H1 (cell line): ENCODE measurements at regions of chr12 and their contacts with region 1.

Region 1: GRCh38 chr12:84502907-84503787 is 409.5 kb downstream of the SLC6A15 start:
- DNase-seq: peak in 1 of 2 experiments; percentile 69
- H3K4me3 ChIP-seq: no peak overlapping the region
- H3K27ac ChIP-seq: no peak overlapping the region
- H3K4me1 ChIP-seq: no peaks in the 10 kb centered on the region
- H3K27me3 ChIP-seq: no peaks in the 10 kb centered on the region
- CTCF ChIP-seq: peak; percentile 44 to 82 (median 74)
- EP300 ChIP-seq: no peak
- POLR2A ChIP-seq: no peak
- RAD21 ChIP-seq: peak; percentile 90 to 95

Region 2: GRCh38 chr12:84290168-84290567 is 213.0 kb before region 1 on chr12:
- CTCF ChIA-PET with region 1: no interaction called
- POLR2A ChIA-PET with region 1: no interaction called
- DNase-seq: no peak
- H3K4me3 ChIP-seq: no peak overlapping the region
- H3K27ac ChIP-seq: no peak overlapping the region
- H3K4me1 ChIP-seq: no peaks in the 10 kb centered on the region
- H3K27me3 ChIP-seq: no peaks in the 10 kb centered on the region
- CTCF ChIP-seq: no peak
- EP300 ChIP-seq: no peak
- POLR2A ChIP-seq: no peak
- RAD21 ChIP-seq: no peak

Region 3: DNA sequence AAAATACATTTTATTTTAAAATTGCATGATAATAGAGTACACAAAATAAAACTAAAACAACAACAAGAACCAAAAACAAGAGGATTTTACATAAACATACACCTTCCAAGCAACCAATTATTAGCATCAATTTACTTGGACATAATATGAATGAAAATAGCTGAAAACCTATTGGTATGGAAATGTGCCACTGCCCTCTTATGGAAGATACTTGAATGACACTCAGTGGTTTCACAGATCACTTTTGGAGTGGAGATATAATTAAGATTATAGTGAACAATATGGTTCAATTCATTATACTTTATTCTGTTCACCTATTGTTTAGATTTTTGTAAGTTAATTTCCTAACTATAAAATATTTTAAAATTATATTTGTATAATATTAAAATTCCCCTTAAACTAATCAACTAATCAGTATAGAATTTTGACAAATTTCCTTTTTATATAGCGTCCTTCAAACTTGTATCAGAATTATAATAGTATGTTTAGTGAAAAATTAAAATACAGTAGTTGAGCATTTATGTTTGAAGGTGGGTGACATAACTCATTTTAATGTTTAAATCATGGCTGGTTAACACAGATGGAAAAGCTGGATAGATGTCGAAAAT is 339.4 kb after region 1 on chr12:
- CTCF ChIA-PET with region 1: interaction called, 12 read pairs
- POLR2A ChIA-PET with region 1: no interaction called
- DNase-seq: no peak
- H3K4me3 ChIP-seq: no peak overlapping the region
- H3K27ac ChIP-seq: no peak overlapping the region
- H3K4me1 ChIP-seq: no peaks in the 10 kb centered on the region
- H3K27me3 ChIP-seq: no peaks in the 10 kb centered on the region
- CTCF ChIP-seq: peak in 2 of 3 experiments; percentile 29 to 64; a peak in 2 of 4 replicates
- EP300 ChIP-seq: no peak
- POLR2A ChIP-seq: no peak
- RAD21 ChIP-seq: peak; percentile 80 to 86